Left cardiac atrium (tissue), 4 donors: ENCODE measurements at regions of chr17 and their contacts with region 1.

Region 1: DNA sequence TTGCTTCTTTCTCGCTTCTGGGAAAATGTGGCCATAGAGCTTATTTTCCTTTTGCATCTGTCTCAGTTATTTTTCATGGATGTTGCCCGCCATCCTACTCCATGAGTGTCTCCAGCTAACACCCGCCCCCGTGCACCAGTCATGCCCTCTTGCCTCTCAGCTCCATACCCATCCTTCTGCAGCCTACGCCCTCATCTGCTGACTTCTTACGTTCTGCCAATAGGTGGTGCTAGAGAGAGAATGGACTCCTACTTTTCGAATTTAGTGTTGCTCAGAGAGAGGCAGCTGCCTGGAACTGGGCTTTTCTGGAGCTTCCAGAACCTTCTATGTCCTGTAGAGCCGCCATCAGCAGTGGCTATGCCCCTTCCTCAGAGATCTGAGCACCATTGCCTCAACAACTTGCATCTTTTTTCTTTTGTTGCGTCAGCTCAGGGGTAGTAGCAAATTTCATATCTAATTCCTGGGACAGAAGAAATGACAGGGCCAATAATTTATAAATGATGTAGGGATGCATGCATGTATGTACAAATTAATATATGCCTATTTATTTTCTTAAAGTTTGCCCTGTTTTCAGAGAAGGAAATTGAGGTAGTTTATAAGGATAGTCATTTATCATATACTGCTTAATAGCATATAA is 119.7 kb upstream of the MYOCD start:
- DNase-seq: no peak
- ATAC-seq: peak; percentile 67 to 86

Region 2: DNA sequence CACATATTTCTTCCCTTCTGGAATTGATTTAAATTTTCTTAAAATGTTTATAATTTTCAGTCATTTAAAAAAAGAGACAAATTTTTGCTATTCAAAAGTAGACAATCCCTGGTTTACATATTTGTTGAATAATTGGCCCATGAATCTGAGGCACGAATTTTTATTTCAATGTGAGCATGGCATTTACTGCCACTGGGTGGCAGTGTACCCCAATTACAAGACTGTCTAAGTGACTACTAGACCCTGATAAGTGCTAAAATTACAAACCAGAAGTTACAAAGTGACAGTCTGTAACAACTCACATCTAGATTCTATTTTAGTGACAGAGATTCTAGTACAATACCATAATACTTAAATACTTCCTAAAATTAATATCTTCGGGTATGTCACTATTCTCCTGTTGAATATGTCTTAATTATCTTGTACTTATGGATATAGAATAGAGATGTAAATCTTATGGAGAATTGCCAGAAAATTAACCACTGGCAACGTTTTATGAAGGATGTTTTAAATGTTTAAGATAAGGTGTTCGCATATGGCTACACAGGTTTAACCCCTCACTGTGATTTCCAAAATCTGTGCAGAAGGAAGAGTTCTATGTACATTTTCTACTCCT is 289.5 kb before region 1 on chr17:
- intact Hi-C with region 1: loop called (anchors 10 kb)
- DNase-seq: peak; percentile 28
- ATAC-seq: peak; percentile 72 to 74

Region 3: GRCh38 chr17:12485361-12485906 is 60.6 kb before region 1 on chr17:
- intact Hi-C with region 1: no loop called
- DNase-seq: no peak
- ATAC-seq: peak in 1 of 2 donors; percentile 21

Region 4: GRCh38 chr17:12667299-12667958 is 121.4 kb after region 1 on chr17:
- intact Hi-C with region 1: loop called (anchors 2 to 5 kb)
- DNase-seq: no peak
- ATAC-seq: peak; percentile 60 to 72

Region 5: GRCh38 chr17:12744298-12744697 is 198.3 kb after region 1 on chr17:
- intact Hi-C with region 1: loop called in 1 of 2 experiments (anchors 5 kb)
- DNase-seq: peak; percentile 48
- ATAC-seq: peak; percentile 89 to 92

Region 6: GRCh38 chr17:12990041-12990808 is 444.2 kb after region 1 on chr17:
- intact Hi-C with region 1: loop called in 1 of 2 experiments (anchors 10 kb)
- DNase-seq: peak; percentile 73
- ATAC-seq: peak; percentile 68 to 77

Region 7: GRCh38 chr17:13002766-13003451 is 456.9 kb after region 1 on chr17:
- intact Hi-C with region 1: loop called (anchors 5 to 10 kb)
- DNase-seq: peak; percentile 88
- ATAC-seq: peak; percentile 87 to 90